ENCODE measurements at regions of chr19 and their contacts with region 1.

Region 1: DNA sequence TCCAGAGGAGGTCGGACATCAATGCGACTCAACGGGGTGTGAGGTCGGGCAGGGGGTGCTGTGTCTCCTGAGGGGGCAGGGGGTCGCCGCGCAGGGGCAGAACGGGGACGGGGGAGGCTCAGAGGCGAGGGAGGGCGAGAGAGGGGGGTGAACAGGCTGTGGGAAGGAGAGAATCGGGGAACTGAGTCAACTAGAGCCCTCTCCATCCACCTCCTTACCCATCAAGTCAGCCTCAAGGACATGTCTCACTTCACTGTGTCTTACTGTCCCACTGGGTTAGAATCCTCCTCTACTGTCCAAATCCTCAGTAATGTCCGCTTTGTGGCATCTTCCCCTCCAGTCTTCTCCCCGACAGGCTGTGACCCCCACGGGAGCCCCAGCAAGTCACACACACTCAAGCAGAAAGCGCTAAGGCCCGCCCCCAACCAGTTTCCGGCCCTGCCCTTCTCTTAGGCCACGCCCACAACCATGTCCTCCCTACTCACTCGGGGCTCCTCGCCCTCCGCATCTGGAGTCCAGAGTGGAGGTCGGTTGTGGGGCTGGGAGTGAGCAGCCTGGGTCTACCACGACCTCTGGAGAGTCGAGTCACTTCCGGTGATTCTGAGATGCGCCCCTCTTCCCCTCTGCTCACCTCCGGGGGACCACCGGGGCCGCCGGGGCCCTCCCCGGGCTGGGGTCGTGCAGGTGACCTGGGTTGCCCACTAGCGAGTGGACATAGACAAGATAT is 9.3 kb downstream of the PLEKHA4 start:
- DNase-seq: peak; percentile 70
- H3K4me3 Mint-ChIP-seq: peak overlapping the region; percentile 91
- H3K27ac Mint-ChIP-seq: peak overlapping the region; percentile 91
- H3K4me1 Mint-ChIP-seq: no peaks in the 10 kb centered on the region
- H3K27me3 Mint-ChIP-seq: no peaks in the 10 kb centered on the region

Region 2: GRCh38 chr19:48379058-48379457 is 480.1 kb before region 1 on chr19:
- intact Hi-C with region 1: no loop called
- DNase-seq: no peak
- H3K4me3 Mint-ChIP-seq: no peak overlapping the region
- H3K27ac Mint-ChIP-seq: no peak overlapping the region
- H3K4me1 Mint-ChIP-seq: no peaks in the 10 kb centered on the region
- H3K27me3 Mint-ChIP-seq: no peaks in the 10 kb centered on the region

Region 3: GRCh38 chr19:48812094-48812929 is 46.8 kb before region 1 on chr19:
- intact Hi-C with region 1: loop called (anchors 5 kb)
- DNase-seq: peak; percentile 58
- H3K4me3 Mint-ChIP-seq: peak overlapping the region; percentile 76
- H3K27ac Mint-ChIP-seq: no peak overlapping the region
- H3K4me1 Mint-ChIP-seq: peaks cover 33% of the 10 kb centered on the region
- H3K27me3 Mint-ChIP-seq: peaks cover 2% of the 10 kb centered on the region

Region 4: GRCh38 chr19:48881741-48882657 is 22.9 kb after region 1 on chr19:
- intact Hi-C with region 1: no loop called
- DNase-seq: no peak
- H3K4me3 Mint-ChIP-seq: no peak overlapping the region
- H3K27ac Mint-ChIP-seq: no peak overlapping the region
- H3K4me1 Mint-ChIP-seq: peaks cover 12% of the 10 kb centered on the region
- H3K27me3 Mint-ChIP-seq: no peaks in the 10 kb centered on the region